MCF 10A (cell line): ENCODE measurements at regions of chr9 and their contacts with region 1.

Region 1: GRCh38 chr9:69421908-69422801 is 97.1 kb downstream of the ENTREP1 start:
- DNase-seq: peak; percentile 71
- H3K4me3 Mint-ChIP-seq: no peak overlapping the region
- H3K27ac Mint-ChIP-seq: no peak overlapping the region
- H3K4me1 Mint-ChIP-seq: no peaks in the 10 kb centered on the region
- H3K27me3 Mint-ChIP-seq: peaks cover 26% of the 10 kb centered on the region
- CTCF ChIP-seq: peak; percentile 78

Region 2: DNA sequence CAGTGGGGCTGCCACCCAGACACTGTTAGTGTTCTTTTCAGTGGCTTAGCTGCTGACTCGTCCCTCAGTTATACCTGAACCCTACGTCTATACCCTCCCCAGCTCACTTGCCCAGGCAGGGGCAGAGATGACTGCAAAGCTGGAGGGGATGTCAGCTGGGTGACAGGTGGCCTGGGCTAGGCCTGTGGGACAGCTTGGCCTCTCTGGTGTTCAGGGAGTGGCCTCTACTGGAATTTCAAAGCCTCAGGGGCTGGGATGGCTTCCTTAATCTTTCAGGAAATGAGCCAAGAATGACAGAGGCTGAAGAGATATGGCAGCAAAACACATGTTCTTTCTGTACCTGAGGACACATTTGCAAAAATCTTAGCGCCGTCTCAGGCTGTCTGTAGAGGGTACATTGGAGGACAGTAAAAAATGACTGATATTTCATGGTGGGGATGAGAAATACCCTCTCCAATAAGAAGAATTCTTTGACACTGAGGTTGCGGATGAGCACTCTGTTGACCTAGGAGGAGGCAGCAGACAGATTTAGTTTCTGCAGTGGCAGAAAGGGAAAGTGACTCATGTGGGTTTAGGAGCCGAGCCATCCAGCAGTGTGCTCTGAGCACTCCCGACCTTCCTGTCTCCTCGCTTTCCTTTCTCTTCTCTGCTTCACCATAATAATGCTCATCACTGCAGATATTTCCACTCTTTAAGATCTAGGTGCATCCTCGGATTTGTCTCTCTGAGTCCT is 42.7 kb before region 1 on chr9:
- CTCF ChIA-PET with region 1: interaction called, 11 read pairs
- POLR2A ChIA-PET with region 1: no interaction called
- intact Hi-C with region 1: no loop called
- DNase-seq: peak; percentile 73
- H3K4me3 Mint-ChIP-seq: peak overlapping the region; percentile 5
- H3K27ac Mint-ChIP-seq: no peak overlapping the region
- H3K4me1 Mint-ChIP-seq: peaks cover 24% of the 10 kb centered on the region
- H3K27me3 Mint-ChIP-seq: no peaks in the 10 kb centered on the region
- CTCF ChIP-seq: no peak

Region 3: GRCh38 chr9:69433392-69433791 is 11.2 kb after region 1 on chr9:
- CTCF ChIA-PET with region 1: interaction called, 15 read pairs
- POLR2A ChIA-PET with region 1: no interaction called
- intact Hi-C with region 1: no loop called
- DNase-seq: no peak
- H3K4me3 Mint-ChIP-seq: no peak overlapping the region
- H3K27ac Mint-ChIP-seq: no peak overlapping the region
- H3K4me1 Mint-ChIP-seq: no peaks in the 10 kb centered on the region
- H3K27me3 Mint-ChIP-seq: peaks cover 18% of the 10 kb centered on the region
- CTCF ChIP-seq: no peak

Region 4: DNA sequence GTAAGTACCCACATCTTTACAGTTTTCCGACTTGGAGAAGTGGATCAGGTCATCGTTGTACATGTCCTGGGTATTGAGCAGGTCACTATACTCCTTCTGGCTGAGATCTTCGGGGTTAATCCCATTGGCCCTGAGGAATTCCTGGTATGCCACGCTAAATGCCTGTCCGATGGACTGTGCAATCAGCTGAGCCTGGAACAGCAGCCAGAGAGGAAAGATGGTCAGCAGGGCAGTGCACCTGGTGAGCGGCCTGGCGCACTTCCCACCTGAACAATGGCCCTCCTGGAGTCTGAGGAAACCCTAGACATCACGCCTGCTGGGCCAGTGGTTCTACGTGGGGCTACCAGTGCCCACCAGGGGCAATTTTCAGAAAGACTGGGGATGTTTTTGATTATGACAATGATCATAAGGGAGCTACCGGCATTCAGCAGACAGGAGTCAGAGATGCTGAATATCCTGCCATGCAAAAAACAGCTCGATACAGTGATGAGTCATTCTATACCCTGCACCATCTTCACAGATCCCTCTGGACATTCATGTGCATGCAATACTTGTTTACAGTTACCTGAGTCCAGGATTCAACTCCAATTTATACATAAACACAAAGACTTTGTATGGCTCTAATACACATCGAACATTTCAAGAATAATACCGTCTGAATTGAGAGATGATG is 30.1 kb after region 1 on chr9:
- CTCF ChIA-PET with region 1: interaction called, 17 read pairs
- POLR2A ChIA-PET with region 1: no interaction called
- intact Hi-C with region 1: no loop called
- DNase-seq: no peak
- H3K4me3 Mint-ChIP-seq: no peak overlapping the region
- H3K27ac Mint-ChIP-seq: no peak overlapping the region
- H3K4me1 Mint-ChIP-seq: no peaks in the 10 kb centered on the region
- H3K27me3 Mint-ChIP-seq: peaks cover 5% of the 10 kb centered on the region
- CTCF ChIP-seq: no peak

Region 5: GRCh38 chr9:69549310-69550202 is 127.4 kb after region 1 on chr9:
- CTCF ChIA-PET with region 1: interaction called, 97 read pairs
- POLR2A ChIA-PET with region 1: no interaction called
- intact Hi-C with region 1: loop called (anchors 2 kb)
- DNase-seq: peak; percentile 55
- H3K4me3 Mint-ChIP-seq: no peak overlapping the region
- H3K27ac Mint-ChIP-seq: no peak overlapping the region
- H3K4me1 Mint-ChIP-seq: peaks cover under 1% of the 10 kb centered on the region
- H3K27me3 Mint-ChIP-seq: peaks cover 66% of the 10 kb centered on the region
- CTCF ChIP-seq: peak; percentile 88

Region 6: DNA sequence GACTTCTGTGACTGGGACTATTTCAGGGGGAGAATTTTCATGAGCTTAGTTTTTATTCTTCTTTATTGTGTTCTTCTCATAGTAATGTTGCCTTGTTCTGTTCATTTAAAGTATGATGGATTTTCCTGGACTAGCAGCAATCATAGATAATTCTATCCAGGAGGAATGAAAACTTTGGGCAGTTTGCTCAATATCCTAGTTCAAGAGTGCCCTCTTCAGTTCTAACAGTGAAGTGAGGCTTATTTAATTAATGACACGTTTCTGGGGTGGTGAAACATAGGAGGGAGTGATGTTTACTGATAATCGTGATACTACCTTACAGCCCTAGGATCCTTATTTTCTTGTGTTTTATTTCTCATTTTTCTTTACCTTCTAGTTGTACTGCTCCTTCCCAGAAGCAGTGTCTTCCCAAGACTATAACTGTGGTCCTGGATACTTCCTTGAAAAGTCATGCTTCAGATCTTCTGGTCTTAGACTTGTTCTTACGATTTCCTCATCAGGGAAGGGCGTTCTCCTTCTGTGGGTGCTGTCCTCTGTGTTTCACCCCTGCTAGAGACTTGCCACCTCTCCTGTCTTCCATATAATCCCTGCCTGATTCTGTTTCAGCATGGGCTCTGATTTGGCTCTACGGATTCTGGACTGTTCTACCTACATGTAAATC is 455.8 kb after region 1 on chr9:
- CTCF ChIA-PET with region 1: interaction called, 12 read pairs
- POLR2A ChIA-PET with region 1: no interaction called
- intact Hi-C with region 1: loop called (anchors 2 kb)
- DNase-seq: peak; percentile 63
- H3K4me3 Mint-ChIP-seq: no peak overlapping the region
- H3K27ac Mint-ChIP-seq: no peak overlapping the region
- H3K4me1 Mint-ChIP-seq: peaks cover 8% of the 10 kb centered on the region
- H3K27me3 Mint-ChIP-seq: no peaks in the 10 kb centered on the region
- CTCF ChIP-seq: peak; percentile 58

Region 7: GRCh38 chr9:69932901-69933300 is 510.7 kb after region 1 on chr9:
- CTCF ChIA-PET with region 1: interaction called, 7 read pairs
- POLR2A ChIA-PET with region 1: no interaction called
- intact Hi-C with region 1: loop called (anchors 5 kb)
- DNase-seq: peak; percentile 62
- H3K4me3 Mint-ChIP-seq: no peak overlapping the region
- H3K27ac Mint-ChIP-seq: no peak overlapping the region
- H3K4me1 Mint-ChIP-seq: peaks cover 8% of the 10 kb centered on the region
- H3K27me3 Mint-ChIP-seq: peaks cover 1% of the 10 kb centered on the region
- CTCF ChIP-seq: peak; percentile 31